T47D (cell line): ENCODE measurements at regions of chr17 and their contacts with region 1.

Region 1: DNA sequence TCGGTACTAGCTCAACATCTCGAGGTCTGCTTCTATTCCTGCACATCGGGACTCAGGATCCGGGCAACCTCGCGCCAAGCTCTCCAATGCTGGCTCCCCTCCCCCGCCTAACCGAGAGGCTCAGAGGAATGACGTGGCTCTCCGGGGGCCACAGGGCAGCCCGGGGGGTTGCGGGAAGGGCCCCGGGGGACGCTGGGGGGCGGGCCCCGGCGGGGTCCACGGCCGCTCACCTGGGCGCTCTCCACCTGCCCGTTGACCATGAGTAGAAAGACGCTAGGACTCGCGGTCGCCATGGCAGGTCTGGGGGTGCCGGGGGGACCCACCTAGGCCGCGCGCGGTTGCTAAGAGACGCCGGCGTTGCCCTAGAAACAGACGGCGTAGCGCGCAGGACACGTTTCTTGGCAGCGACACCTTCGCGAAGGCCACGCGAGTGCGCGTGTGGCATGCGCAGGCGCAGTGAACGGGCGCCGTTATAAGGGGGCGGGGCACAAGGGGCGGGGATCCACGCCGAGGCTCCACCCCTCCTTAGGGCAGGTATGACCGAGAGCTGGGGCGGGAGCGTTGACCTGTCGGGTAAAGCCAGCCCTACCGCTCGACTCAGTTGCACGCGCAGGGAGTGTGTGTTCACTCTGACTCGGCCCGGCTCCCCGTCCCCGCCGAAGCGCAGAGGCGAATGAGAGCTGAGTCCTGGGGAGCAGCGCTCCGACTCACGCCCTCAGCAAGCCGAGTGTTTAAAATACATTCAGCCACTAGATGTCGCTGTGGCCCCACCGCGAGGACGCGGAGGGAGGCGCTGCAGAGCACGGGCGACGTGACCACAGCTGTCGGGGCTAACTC is at the start of gene B9D1:
- DNase-seq: peak; percentile 97 to 98

Region 2: DNA sequence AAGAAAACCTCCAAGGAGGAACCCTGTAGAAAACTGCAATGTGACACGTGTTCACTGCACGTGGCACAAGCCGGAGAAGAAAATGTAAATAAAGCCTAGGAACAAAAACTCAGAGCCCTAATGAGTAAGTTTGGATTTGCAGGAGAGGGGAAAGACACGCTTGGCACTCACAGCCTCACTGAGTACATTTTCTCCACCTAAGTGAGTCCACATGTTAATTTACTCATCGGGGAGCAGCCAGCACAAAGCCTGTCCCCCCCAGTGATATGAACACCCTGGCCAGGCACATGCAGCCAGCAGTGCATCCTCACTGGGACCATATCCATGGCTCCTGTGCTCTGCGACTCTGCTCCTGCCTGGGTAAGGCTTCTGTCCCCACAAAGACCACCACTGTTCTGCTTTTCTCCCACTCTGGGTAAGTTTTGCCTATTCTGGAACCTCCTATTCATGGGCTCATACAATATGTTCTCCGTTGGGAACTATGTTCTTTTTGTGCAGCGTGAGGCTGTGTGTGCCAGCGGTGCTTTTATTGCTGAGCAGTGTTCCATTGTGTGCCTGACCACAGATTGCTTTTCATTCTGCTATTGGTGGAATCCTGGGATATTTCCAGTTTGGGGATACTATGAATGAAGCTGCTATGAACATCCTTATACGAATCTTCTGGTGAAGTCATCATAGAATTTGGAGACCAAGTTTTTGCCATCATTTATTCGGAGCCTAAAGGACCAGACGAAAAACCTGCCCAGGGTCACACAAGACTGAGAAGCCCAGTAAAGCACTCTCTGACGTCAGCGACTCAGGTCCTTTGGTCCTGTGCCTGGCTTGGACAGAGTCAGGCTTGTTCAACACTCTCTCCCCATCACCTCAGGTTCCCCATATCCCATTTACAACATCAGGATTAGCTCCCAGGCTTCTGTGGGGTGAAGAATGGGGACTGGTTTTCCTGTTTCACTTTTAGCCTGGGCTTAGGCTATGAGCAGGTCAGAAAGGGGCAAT is 101.8 kb after region 1 on chr17:
- in situ Hi-C with region 1: loop called (anchors 10 kb)
- DNase-seq: no peak